ENCODE measurements at regions of chr12 and their contacts with region 1.

Region 1: GRCh38 chr12:114655934-114656749 is 27.8 kb downstream of the TBX3 start:
- DNase-seq: peak; percentile 98
- ATAC-seq: peak; percentile 92
- H3K4me3 ChIP-seq: peak overlapping the region in 2 of 3 experiments; percentile 14 to 50; a peak in 2 of 6 replicates
- H3K27ac ChIP-seq: peak overlapping the region; percentile 97
- H3K4me1 ChIP-seq: peaks cover 63% of the 10 kb centered on the region
- H3K27me3 ChIP-seq: no peaks in the 10 kb centered on the region
- CTCF ChIP-seq: 0 out of 2 replicates have a peak, but pooled peaks have one; percentile 25
- EP300 ChIP-seq: peak; percentile 72 to 99; a peak in 3 of 4 replicates
- POLR2A ChIP-seq: peak in 1 of 2 experiments; percentile 46; a peak in 1 of 4 replicates
- RAD21 ChIP-seq: no peak

Region 2: DNA sequence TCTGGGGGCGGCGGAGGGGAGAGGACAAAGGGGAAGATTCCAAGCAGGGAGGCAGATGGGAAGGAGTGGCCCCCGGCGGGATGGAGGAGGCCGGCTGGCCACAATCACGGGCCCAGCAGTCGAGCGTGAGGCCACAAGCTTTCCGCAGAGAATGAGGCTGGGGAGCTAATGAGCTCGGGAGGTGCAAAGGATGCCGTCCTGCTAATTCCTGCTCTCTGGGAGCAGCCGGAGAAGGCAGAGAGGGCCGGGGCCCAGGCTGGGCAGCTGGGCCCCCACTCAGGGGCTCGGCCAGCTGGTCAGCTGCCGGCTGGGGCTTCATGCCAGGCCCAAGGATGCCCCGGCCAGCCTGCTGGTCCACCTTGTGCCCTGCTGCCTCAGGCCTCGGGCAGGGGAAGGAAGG is 1086.3 kb before region 1 on chr12:
- CTCF ChIA-PET with region 1: no interaction called
- POLR2A ChIA-PET with region 1: no interaction called
- in situ Hi-C with region 1: no loop called
- intact Hi-C with region 1: no loop called
- DNase-seq: no peak
- ATAC-seq: no peak
- H3K4me3 ChIP-seq: no peak overlapping the region
- H3K27ac ChIP-seq: no peak overlapping the region
- H3K4me1 ChIP-seq: no peaks in the 10 kb centered on the region
- H3K27me3 ChIP-seq: peaks cover 4 to 35% of the 10 kb centered on the region in 2 experiments
- CTCF ChIP-seq: no peak
- EP300 ChIP-seq: no peak
- POLR2A ChIP-seq: no peak
- RAD21 ChIP-seq: no peak

Region 3: GRCh38 chr12:114611145-114612018 is 44.8 kb before region 1 on chr12:
- CTCF ChIA-PET with region 1: no interaction called
- POLR2A ChIA-PET with region 1: interaction called, 11 read pairs
- in situ Hi-C with region 1: no loop called
- intact Hi-C with region 1: loop called (anchors 1 kb)
- DNase-seq: peak; percentile 100
- ATAC-seq: peak; percentile 99
- H3K4me3 ChIP-seq: peak overlapping the region in 2 of 3 experiments; percentile 16 to 44; a peak in 2 of 6 replicates
- H3K27ac ChIP-seq: peak overlapping the region; percentile 91
- H3K4me1 ChIP-seq: peaks cover 81% of the 10 kb centered on the region
- H3K27me3 ChIP-seq: no peaks in the 10 kb centered on the region
- CTCF ChIP-seq: no peak
- EP300 ChIP-seq: peak; percentile 67 to 96; a peak in 3 of 4 replicates
- POLR2A ChIP-seq: peak; percentile 34 to 59; a peak in 2 of 4 replicates
- RAD21 ChIP-seq: no peak

Region 4: GRCh38 chr12:114744691-114745090 is 88.5 kb after region 1 on chr12:
- CTCF ChIA-PET with region 1: no interaction called
- POLR2A ChIA-PET with region 1: no interaction called
- in situ Hi-C with region 1: no loop called
- intact Hi-C with region 1: no loop called
- DNase-seq: no peak
- ATAC-seq: no peak; the same call in 2 of the 3 replicates
- H3K4me3 ChIP-seq: no peak overlapping the region
- H3K27ac ChIP-seq: no peak overlapping the region
- H3K4me1 ChIP-seq: peaks cover 50% of the 10 kb centered on the region
- H3K27me3 ChIP-seq: no peaks in the 10 kb centered on the region
- CTCF ChIP-seq: no peak
- EP300 ChIP-seq: no peak
- POLR2A ChIP-seq: no peak
- RAD21 ChIP-seq: no peak

Region 5: DNA sequence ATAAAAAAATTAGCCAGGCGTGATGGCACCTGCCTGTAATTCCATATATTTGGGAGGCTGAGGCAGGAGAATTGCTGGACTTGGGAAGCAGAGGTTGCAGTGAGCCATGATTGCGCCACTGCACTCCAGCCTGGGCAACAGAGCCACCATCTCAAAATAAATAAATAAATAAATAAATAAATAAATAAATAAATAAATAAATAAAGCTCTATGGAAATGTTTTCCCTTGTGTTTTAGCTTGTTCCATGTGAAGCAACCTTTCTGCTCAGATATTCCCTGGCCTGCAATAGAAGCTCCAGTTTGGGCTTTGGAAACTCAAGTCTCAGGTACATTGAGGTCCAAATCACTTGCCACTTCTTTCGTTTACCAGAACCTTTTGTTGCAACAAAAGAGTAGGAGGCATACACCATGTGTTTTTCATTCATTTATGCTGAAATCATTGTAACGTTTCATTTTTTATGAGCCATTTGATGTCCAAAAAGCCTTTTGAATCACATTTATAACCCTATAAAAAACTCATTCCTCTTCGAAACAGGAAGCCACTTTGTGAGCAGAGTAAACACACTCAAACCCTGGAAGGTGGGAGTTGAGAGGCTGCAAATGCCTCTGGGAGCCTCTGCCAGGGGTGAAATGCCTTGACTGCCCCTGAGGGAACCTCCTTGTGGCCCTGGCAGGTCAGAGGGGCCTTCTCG is 404.5 kb after region 1 on chr12:
- CTCF ChIA-PET with region 1: no interaction called
- POLR2A ChIA-PET with region 1: no interaction called
- in situ Hi-C with region 1: no loop called
- intact Hi-C with region 1: no loop called
- DNase-seq: no peak
- ATAC-seq: no peak
- H3K4me3 ChIP-seq: no peak overlapping the region
- H3K27ac ChIP-seq: no peak overlapping the region
- H3K4me1 ChIP-seq: no peaks in the 10 kb centered on the region
- H3K27me3 ChIP-seq: no peaks in the 10 kb centered on the region
- CTCF ChIP-seq: no peak
- EP300 ChIP-seq: no peak
- POLR2A ChIP-seq: no peak
- RAD21 ChIP-seq: no peak

Measured in HepG2 (cell line).